HAP-1 (cell line): ENCODE measurements at regions of chr1 and their contacts with region 1.

Region 1: DNA sequence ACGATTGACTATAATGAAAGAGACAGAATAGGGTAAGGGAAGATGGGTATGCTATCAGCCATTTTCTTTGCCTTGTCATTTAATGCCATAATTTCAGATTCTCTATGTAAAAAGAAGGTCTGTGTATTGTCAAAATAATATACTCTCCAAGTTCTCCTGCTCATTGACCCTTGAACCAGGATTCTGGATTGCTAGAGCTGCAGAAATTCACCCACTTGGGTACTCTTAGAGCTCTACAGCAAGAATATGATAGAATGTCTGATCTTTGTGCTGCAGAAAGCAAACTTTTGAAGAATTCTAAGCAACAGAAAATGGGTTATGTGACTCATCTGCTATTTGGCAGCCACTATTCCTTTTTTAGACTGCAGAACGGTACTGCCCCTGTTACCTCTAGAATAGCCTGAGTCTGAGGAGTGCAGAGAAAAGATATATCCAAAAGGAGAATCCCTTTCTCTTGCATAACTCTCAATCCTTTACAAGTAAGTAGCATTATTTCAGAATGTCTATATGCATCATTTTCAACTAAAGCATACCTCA is 78.2 kb upstream of the TENT5C start:
- DNase-seq: no peak
- H3K4me3 ChIP-seq: no peak overlapping the region
- H3K4me1 ChIP-seq: no peaks in the 10 kb centered on the region
- H3K27me3 ChIP-seq: no peaks in the 10 kb centered on the region

Region 2: DNA sequence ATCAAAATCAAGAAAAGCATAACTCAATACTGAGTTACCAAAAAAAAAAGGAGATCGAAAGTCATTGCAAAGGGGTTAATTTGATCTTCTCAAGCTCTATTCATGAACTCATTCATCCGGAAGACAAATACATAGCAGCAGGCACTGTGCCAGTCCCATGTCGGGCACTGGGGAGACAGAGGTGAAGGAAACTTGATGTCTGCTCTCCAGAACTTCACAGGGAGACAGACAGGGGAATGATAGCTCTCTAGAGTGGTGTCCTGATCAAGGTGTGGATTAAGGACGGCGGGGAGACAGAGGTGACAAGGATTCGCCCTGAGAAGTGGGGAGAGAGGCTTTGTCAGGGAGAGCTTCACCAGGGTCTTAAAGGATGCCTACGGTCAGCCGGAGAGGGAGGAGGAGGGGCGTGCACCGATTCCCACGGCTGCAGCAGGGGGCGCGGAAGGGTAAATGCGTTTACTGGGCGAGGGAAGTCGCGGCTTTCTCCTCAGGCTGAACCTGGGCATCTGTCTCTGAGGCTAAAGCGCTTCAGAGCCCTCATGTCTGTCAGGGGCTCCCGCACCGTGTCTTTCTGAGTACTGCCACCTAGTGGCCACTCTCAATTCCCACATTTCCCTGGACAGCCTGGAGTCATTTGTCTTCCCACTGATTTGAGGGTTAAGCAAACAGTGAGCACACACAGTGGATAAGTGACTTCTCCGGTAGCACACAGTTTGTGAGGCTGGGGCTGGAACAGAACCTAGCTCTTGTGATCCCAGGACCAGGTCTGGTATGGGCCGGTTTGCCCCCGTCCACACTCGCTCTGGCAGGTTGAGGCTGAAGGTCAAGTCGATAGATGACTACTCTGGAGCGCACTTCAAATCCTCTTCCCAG is 231.0 kb after region 1 on chr1:
- in situ Hi-C with region 1: loop called (anchors 10 kb)
- DNase-seq: peak; percentile 79 to 83
- H3K4me3 ChIP-seq: peak overlapping the region; percentile 10
- H3K4me1 ChIP-seq: no peaks in the 10 kb centered on the region; the same call in 1 of the 2 replicates
- H3K27me3 ChIP-seq: peaks cover 7% of the 10 kb centered on the region